GM23248 (cell line): ENCODE measurements at regions of chr11 and their contacts with region 1.

Region 1: DNA sequence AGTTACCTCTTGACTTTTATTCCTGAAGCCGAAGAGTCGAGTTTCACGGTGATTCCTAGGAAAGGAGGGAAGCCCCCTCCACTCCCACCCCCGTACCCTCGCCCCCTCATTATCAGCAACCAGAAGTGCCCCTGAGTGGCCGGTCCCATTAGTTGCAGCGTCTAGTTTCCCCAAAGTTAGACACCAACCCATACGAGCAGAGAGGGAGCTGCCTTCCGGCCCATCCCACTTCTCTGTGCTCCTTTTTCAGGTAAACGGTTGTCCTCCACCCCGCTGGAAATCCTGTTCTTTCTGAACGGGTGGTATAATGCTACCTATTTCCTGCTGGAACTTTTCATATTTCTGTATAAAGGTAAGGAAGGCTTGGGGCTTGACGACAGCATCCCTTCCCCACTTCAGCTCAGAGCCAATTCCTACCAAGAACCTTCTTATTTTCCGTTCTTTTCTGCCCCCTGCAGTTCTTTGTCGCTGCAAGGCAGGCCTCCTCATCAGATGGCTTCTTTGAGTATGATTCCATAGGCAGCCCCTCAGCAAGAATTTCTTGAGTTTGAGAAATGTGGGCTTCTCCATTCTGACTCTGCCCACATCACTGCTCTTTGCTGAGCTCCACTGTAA is 701 bp downstream of the TMEM216 start:
- DNase-seq: peak; percentile 57
- H3K4me3 ChIP-seq: peak overlapping the region; percentile 87
- H3K27ac ChIP-seq: peak overlapping the region; percentile 37
- H3K4me1 ChIP-seq: peaks cover 8% of the 10 kb centered on the region
- H3K27me3 ChIP-seq: no peaks in the 10 kb centered on the region

Region 2: DNA sequence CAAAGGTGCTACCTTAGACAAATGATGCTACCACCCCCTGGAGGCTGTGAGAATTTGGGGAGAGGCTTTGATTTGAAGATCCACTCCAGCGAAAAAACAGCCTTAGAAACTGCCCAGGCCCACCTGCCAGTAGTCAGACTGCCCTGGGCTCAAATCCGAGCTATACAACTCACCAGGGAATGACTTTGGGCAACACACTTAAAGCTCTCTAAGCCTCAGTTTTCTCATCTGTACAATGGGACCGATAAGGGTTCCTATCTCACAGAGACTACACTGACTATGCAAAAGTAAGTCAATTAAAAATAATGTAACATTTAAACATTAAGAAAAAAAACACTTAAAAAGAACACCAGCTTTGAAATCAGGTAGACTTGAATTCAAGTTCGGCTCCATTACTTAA is 117.9 kb before region 1 on chr11:
- in situ Hi-C with region 1: no loop called
- DNase-seq: no peak
- H3K4me3 ChIP-seq: no peak overlapping the region
- H3K27ac ChIP-seq: no peak overlapping the region
- H3K4me1 ChIP-seq: peaks cover 7% of the 10 kb centered on the region
- H3K27me3 ChIP-seq: no peaks in the 10 kb centered on the region

Region 3: DNA sequence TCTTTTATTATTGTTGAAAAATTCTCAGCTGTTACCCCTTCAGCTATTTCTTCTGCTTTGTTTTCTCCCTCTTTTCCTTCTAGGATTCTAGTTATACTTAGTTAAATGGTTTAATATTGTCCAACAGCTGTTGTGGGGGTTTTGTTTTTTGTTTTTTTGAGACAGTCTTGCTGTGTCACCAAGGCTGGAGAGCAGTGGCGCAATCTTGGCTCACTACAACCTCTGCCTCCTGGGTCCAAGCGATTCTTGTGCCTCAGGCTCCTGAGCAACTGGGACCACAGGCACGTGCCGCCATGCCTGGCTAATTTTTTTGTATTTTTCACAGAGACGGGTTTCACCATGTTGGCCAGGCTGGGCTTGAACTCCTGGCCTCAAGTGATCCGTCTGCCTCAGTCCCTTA is 49.5 kb after region 1 on chr11:
- in situ Hi-C with region 1: loop called (anchors 5 kb)
- DNase-seq: no peak
- H3K4me3 ChIP-seq: no peak overlapping the region
- H3K27ac ChIP-seq: no peak overlapping the region
- H3K4me1 ChIP-seq: peaks cover 18% of the 10 kb centered on the region
- H3K27me3 ChIP-seq: no peaks in the 10 kb centered on the region